GM12878 (cell line): ENCODE measurements at regions of chr3 and their contacts with region 1.

Region 1: DNA sequence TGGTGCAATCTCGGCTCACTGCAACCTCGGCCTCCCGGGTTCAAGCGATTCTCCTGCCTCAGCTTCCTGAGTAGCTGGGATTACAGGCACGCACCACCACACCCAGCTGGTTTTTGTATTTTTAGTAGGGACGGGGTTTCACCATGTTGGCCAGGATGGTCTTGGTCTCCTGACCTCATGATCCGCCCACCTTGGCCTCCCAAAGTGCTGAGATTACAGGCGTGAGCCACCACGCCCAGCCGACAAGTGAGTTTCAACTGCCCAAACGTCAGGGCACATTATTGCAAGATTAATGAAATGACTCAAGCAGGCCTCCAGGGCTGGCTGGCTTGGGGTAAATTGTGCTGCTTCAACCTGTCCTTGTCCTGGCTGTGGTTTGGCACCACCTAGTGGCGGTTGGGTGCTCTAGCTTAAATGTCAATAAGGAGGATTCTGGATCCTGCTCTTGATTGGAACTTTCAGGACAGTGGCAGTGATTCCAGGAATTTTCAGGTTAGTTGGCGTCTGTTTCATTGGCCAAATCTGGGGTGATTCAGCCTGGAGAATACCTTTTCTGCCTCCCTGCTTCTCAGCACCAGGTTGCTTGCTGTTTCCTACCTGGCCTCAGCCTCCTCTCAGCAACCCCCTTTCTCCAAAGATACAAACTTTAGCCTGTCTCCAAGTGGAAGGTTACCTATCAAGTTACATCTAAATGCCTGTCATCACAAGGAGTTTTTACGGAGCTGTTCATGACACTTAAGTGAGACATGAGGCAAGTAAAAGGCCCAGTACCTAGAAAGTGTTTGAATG is 32.4 kb upstream of the SACM1L start:
- DNase-seq: peak; percentile 76
- ATAC-seq: peak; percentile 88
- H3K4me3 ChIP-seq: no peak overlapping the region
- H3K27ac ChIP-seq: peak overlapping the region; percentile 57
- H3K4me1 ChIP-seq: peaks cover 33% of the 10 kb centered on the region
- H3K27me3 ChIP-seq: no peaks in the 10 kb centered on the region
- CTCF ChIP-seq: peak; percentile 83 to 93 (median 92)
- EP300 ChIP-seq: no peak
- POLR2A ChIP-seq: no peak
- RAD21 ChIP-seq: peak; percentile 93

Region 2: DNA sequence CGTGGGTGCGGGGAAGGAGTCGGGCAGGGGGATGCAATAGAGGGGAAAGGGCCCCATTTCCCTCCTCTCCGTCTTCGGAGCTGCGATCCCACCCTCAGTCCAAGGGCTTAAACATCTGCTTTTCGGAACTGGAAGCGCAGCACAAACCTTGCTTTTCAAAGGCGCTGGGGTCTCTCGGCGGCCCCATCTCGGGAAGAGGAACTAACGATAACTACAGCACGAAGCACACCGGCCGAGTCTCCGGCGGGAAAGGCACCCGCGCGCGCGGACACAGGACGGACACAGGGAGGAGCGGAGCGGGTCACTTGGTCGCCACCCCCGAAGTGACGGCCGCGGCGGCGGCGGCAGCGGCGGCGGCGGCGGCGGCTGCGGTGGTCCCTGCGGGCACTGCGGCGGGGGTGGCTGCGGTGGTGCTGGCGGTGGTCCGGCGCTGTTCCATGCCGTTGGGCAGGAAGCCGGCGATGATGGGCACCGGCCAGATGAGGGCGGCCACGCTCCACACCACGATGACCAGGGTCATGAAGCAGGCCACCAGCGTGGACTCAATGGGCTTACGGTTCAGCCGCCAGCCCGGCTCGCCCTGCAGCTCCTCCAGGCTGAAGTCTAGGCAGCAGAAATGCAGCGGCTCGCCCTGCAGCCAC is 431.8 kb before region 1 on chr3:
- CTCF ChIA-PET with region 1: interaction called, 3 read pairs
- POLR2A ChIA-PET with region 1: no interaction called
- RAD21 ChIA-PET with region 1: no interaction called
- SMC1A ChIA-PET with region 1: no interaction called
- in situ Hi-C with region 1: loop called (anchors 10 kb)
- intact Hi-C with region 1: no loop called
- DNase-seq: no peak
- ATAC-seq: peak; percentile 59
- H3K4me3 ChIP-seq: no peak overlapping the region
- H3K27ac ChIP-seq: no peak overlapping the region
- H3K4me1 ChIP-seq: no peaks in the 10 kb centered on the region
- H3K27me3 ChIP-seq: peaks cover 3 to 13% of the 10 kb centered on the region in 2 experiments
- CTCF ChIP-seq: peak in 2 of 3 experiments; percentile 34 to 56; a peak in 3 of 6 replicates
- EP300 ChIP-seq: no peak
- POLR2A ChIP-seq: no peak
- RAD21 ChIP-seq: 0 out of 2 replicates have a peak, but pooled peaks have one; percentile 19

Region 3: GRCh38 chr3:45537970-45538640 is 118.7 kb before region 1 on chr3:
- CTCF ChIA-PET with region 1: interaction called, 25 read pairs
- POLR2A ChIA-PET with region 1: no interaction called
- RAD21 ChIA-PET with region 1: interaction called, 5 read pairs
- SMC1A ChIA-PET with region 1: interaction called, 8 read pairs
- in situ Hi-C with region 1: no loop called
- intact Hi-C with region 1: no loop called
- DNase-seq: no peak
- ATAC-seq: no peak; the same call in 2 of the 3 replicates
- H3K4me3 ChIP-seq: no peak overlapping the region
- H3K27ac ChIP-seq: 0 out of 2 replicates have a peak overlapping the region, but pooled peaks have one; percentile 21
- H3K4me1 ChIP-seq: no peaks in the 10 kb centered on the region; the same call in 1 of the 2 replicates
- H3K27me3 ChIP-seq: no peaks in the 10 kb centered on the region
- CTCF ChIP-seq: no peak
- EP300 ChIP-seq: 0 out of 4 replicates have a peak, but pooled peaks of 1 of the 2 experiments have one; percentile 12
- POLR2A ChIP-seq: no peak
- RAD21 ChIP-seq: no peak

Region 4: GRCh38 chr3:45593708-45594609 is 62.8 kb before region 1 on chr3:
- CTCF ChIA-PET with region 1: interaction called, 78 read pairs
- POLR2A ChIA-PET with region 1: interaction called, 12 read pairs
- RAD21 ChIA-PET with region 1: interaction called, 40 read pairs
- SMC1A ChIA-PET with region 1: interaction called, 45 read pairs
- in situ Hi-C with region 1: loop called (anchors 5 kb)
- intact Hi-C with region 1: loop called (anchors 1 kb)
- DNase-seq: no peak
- ATAC-seq: peak; percentile 81
- H3K4me3 ChIP-seq: peak overlapping the region; percentile 81
- H3K27ac ChIP-seq: peak overlapping the region; percentile 89
- H3K4me1 ChIP-seq: peaks cover 18% of the 10 kb centered on the region
- H3K27me3 ChIP-seq: no peaks in the 10 kb centered on the region
- CTCF ChIP-seq: no peak
- EP300 ChIP-seq: no peak
- POLR2A ChIP-seq: peak; percentile 85
- RAD21 ChIP-seq: no peak

Region 5: GRCh38 chr3:45677033-45677433 is 20.3 kb after region 1 on chr3:
- CTCF ChIA-PET with region 1: interaction called, 51 read pairs
- POLR2A ChIA-PET with region 1: interaction called, 3 read pairs
- RAD21 ChIA-PET with region 1: interaction called, 3 read pairs
- SMC1A ChIA-PET with region 1: interaction called, 9 read pairs
- in situ Hi-C with region 1: no loop called
- intact Hi-C with region 1: no loop called
- DNase-seq: no peak
- ATAC-seq: no peak
- H3K4me3 ChIP-seq: no peak overlapping the region
- H3K27ac ChIP-seq: no peak overlapping the region
- H3K4me1 ChIP-seq: no peaks in the 10 kb centered on the region
- H3K27me3 ChIP-seq: no peaks in the 10 kb centered on the region
- CTCF ChIP-seq: no peak
- EP300 ChIP-seq: no peak
- POLR2A ChIP-seq: peak; percentile 24; the same call in 1 of the 2 replicates
- RAD21 ChIP-seq: no peak

Region 6: DNA sequence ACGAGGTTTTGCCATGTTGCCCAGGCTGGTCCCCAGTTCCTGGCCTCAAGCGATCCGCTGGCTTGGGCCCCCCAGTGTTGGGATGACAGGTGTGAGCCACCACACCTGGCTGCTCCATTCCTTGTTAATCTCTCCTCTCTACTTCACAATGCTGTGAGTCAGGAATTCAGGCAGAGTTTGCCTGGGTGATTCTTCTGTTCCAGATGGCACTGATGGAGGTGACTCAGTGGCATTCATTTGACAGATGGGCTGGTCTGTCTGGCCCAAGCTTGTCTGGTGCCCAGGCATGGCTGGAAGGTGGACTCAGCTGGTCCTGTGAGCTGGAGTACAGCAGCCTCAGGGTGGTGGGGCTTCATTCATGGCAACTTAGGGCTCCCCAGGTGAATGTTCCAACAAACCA is 96.3 kb after region 1 on chr3:
- CTCF ChIA-PET with region 1: no interaction called
- POLR2A ChIA-PET with region 1: no interaction called
- RAD21 ChIA-PET with region 1: no interaction called
- SMC1A ChIA-PET with region 1: no interaction called
- in situ Hi-C with region 1: no loop called
- intact Hi-C with region 1: no loop called
- DNase-seq: no peak
- ATAC-seq: no peak
- H3K4me3 ChIP-seq: no peak overlapping the region
- H3K27ac ChIP-seq: no peak overlapping the region
- H3K4me1 ChIP-seq: no peaks in the 10 kb centered on the region
- H3K27me3 ChIP-seq: no peaks in the 10 kb centered on the region
- CTCF ChIP-seq: no peak
- EP300 ChIP-seq: no peak
- POLR2A ChIP-seq: no peak
- RAD21 ChIP-seq: no peak

Region 7: GRCh38 chr3:45929042-45929679 is 272.4 kb after region 1 on chr3:
- CTCF ChIA-PET with region 1: interaction called, 12 read pairs
- POLR2A ChIA-PET with region 1: no interaction called
- RAD21 ChIA-PET with region 1: interaction called, 10 read pairs
- SMC1A ChIA-PET with region 1: interaction called, 3 read pairs
- in situ Hi-C with region 1: no loop called
- intact Hi-C with region 1: no loop called
- DNase-seq: no peak
- ATAC-seq: peak; percentile 100
- H3K4me3 ChIP-seq: no peak overlapping the region
- H3K27ac ChIP-seq: no peak overlapping the region
- H3K4me1 ChIP-seq: no peaks in the 10 kb centered on the region; the same call in 1 of the 2 replicates
- H3K27me3 ChIP-seq: no peaks in the 10 kb centered on the region
- CTCF ChIP-seq: peak; percentile 94 to 98 (median 97); a peak in 5 of 6 replicates
- EP300 ChIP-seq: no peak
- POLR2A ChIP-seq: no peak
- RAD21 ChIP-seq: peak; percentile 99